Esophagus squamous epithelium (tissue), 5 donors: ENCODE measurements at regions of chr3 and their contacts with region 1.

Region 1: DNA sequence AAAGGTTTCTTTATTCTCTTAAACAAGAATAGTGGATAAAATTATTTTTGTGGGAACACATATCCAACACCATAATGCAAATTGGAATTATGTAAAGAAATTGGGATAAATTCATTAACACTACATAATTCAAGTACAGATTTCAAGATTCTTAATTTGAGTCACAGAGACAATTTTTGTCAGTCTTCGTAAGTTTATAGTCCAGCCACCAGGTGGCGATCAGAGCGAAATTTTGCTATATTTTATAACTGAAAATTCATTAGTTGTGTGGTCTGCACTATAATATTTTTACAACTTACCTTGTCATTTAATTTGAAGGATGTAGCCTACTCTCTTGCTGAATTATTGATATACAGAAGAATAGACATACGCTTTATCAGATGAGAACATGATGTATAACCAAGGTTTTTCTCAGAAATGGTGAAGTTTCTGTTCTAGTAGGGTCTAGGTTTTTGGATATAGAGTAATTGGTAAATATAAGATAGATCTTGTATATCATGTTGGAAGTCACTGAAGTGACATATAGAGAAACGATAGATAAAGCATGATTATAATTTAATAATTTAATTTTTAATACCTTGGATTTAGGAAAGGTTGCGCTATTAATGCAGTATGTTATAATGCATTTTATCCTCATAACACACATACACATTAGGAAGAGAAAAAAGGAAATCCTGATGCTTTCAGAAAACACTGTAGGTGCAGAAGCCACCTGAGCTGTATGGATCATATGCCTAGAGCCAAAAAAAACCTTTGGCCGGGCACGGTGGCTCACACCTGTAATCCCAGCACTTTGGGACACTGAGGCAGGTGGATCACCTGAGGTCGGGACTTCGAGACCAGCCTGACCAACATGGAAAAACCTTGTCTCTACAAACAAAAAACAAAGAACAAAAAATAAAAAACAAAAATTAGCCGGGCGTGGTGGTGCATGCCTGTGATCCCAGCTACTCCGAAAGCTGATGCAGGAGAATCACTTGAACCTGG is 31.7 kb downstream of the PLSCR4 start:
- DNase-seq: no peak
- H3K4me3 ChIP-seq: no peak overlapping the region
- H3K27ac ChIP-seq: no peak overlapping the region
- H3K4me1 ChIP-seq: peaks cover 0 to 17% (median 4%) of the 10 kb centered on the region in 3 donors
- H3K27me3 ChIP-seq: no peaks in the 10 kb centered on the region
- CTCF ChIP-seq: peak; percentile 37 to 84 (median 64)
- POLR2A ChIP-seq: no peak

Region 2: GRCh38 chr3:146326670-146327543 is 107.7 kb after region 1 on chr3:
- intact Hi-C with region 1: loop called (anchors 5 kb)
- DNase-seq: no peak
- H3K4me3 ChIP-seq: peak overlapping the region in 1 of 4 donors; percentile 12
- H3K27ac ChIP-seq: no peak overlapping the region
- H3K4me1 ChIP-seq: peaks cover 0 to 3% (median 0%) of the 10 kb centered on the region in 3 donors
- H3K27me3 ChIP-seq: no peaks in the 10 kb centered on the region
- CTCF ChIP-seq: peak in 5 of 6 experiments; percentile 46 to 69 (median 60)
- POLR2A ChIP-seq: no peak

Region 3: DNA sequence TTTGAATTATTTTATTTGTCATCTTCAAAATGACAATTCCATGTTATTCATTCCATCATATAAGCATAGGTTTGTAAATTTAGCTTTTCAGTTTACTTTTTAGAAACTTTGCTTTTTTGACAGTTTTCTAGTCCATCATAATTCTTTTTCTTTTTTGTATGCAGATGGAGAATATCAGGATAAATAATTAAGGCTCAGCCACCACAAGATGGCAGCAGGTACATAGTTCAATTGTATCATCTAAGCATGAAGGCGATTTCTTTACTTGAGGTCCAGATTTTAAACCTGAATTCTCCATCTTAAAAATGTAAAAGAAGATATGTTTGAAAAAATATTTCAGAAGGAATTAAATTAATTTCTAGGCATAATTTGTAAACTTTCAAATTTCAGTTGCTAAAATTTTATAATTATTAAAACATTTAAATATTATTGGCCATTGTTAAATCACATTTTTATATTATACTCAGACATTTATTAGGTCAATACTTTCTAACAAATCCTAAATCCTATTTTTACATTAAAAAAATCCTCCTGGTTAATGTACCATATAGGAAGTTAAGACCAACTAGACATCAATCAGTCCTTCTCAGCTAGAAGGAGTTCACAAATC is 370.8 kb after region 1 on chr3:
- intact Hi-C with region 1: loop called (anchors 10 kb)
- DNase-seq: no peak
- H3K4me3 ChIP-seq: no peak overlapping the region
- H3K27ac ChIP-seq: no peak overlapping the region
- H3K4me1 ChIP-seq: no peaks in the 10 kb centered on the region
- H3K27me3 ChIP-seq: no peaks in the 10 kb centered on the region
- CTCF ChIP-seq: peak in 5 of 6 experiments; percentile 22 to 58 (median 46)
- POLR2A ChIP-seq: no peak